ENCODE measurements at regions of chr2 and their contacts with region 1.

Region 1: GRCh38 chr2:181354626-181355025 is 102.6 kb upstream of the ITGA4 start:
- DNase-seq: no peak
- ATAC-seq: no peak
- H3K4me3 ChIP-seq: no peak overlapping the region
- H3K4me3 Mint-ChIP-seq: no peak overlapping the region
- H3K27ac ChIP-seq: no peak overlapping the region
- H3K27ac Mint-ChIP-seq: no peak overlapping the region
- H3K4me1 ChIP-seq: no peaks in the 10 kb centered on the region
- H3K4me1 Mint-ChIP-seq: peaks cover 8% of the 10 kb centered on the region
- H3K27me3 ChIP-seq: no peaks in the 10 kb centered on the region
- H3K27me3 Mint-ChIP-seq: no peaks in the 10 kb centered on the region
- CTCF ChIP-seq: no peak

Region 2: DNA sequence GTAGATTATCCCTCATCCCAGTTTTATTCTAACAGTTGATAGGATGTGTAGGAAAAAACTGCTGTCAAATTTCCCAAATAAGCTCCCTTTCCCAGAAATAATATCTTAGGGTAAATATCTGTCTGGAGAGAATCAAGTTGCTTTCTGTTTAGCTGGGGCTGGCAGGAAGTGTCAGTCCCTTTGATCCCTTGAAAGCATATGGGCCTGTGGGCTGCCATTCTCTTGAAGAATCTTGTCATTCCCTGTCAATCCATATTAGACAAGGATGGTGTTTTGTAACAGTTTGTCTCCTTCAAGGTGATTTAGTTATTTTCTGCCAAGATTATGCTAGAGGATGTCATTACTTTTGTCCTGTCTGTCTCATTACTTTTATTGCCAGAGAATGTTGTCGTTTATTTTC is 411.4 kb before region 1 on chr2:
- CTCF ChIA-PET with region 1: no interaction called
- POLR2A ChIA-PET with region 1: no interaction called
- intact Hi-C with region 1: no loop called
- DNase-seq: no peak
- ATAC-seq: no peak
- H3K4me3 ChIP-seq: no peak overlapping the region
- H3K4me3 Mint-ChIP-seq: no peak overlapping the region
- H3K27ac ChIP-seq: no peak overlapping the region
- H3K27ac Mint-ChIP-seq: no peak overlapping the region
- H3K4me1 ChIP-seq: no peaks in the 10 kb centered on the region
- H3K4me1 Mint-ChIP-seq: peaks cover 6% of the 10 kb centered on the region
- H3K27me3 ChIP-seq: no peaks in the 10 kb centered on the region
- H3K27me3 Mint-ChIP-seq: peaks cover 11% of the 10 kb centered on the region
- CTCF ChIP-seq: no peak

Region 3: GRCh38 chr2:181393472-181393871 is 38.8 kb after region 1 on chr2:
- CTCF ChIA-PET with region 1: no interaction called
- POLR2A ChIA-PET with region 1: no interaction called
- intact Hi-C with region 1: loop called in 1 of 2 experiments (anchors 5 kb)
- DNase-seq: peak in 2 of 9 experiments; percentile 62 to 80
- ATAC-seq: peak; percentile 58
- H3K4me3 ChIP-seq: peak overlapping the region; percentile 13 to 55
- H3K4me3 Mint-ChIP-seq: peak overlapping the region; percentile 76
- H3K27ac ChIP-seq: peak overlapping the region; percentile 38 to 97
- H3K27ac Mint-ChIP-seq: peak overlapping the region; percentile 87
- H3K4me1 ChIP-seq: peaks cover 17% of the 10 kb centered on the region
- H3K4me1 Mint-ChIP-seq: peaks cover 30% of the 10 kb centered on the region
- H3K27me3 ChIP-seq: no peaks in the 10 kb centered on the region
- H3K27me3 Mint-ChIP-seq: no peaks in the 10 kb centered on the region
- CTCF ChIP-seq: no peak

Region 4: DNA sequence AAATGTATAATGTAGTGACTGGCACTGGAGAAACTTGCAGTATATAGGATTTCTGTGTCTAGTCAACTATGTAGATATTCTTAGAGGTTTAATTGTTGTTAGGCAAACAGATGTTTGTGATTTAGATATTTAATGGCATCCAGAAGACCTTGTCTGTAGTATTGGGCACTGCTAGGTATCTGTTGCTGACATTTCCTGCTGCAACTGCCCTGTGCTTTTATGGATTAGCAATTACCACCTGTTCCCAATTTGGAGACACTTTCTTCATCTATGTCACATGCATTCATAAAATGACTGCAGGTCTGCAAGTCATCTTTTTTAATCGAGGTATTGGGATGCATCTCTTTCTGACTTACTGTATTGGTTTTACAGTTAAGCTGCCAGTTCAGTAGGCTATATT is 173.8 kb after region 1 on chr2:
- CTCF ChIA-PET with region 1: no interaction called
- POLR2A ChIA-PET with region 1: no interaction called
- intact Hi-C with region 1: no loop called
- DNase-seq: no peak
- ATAC-seq: no peak
- H3K4me3 ChIP-seq: no peak overlapping the region
- H3K4me3 Mint-ChIP-seq: no peak overlapping the region
- H3K27ac ChIP-seq: no peak overlapping the region
- H3K27ac Mint-ChIP-seq: peak overlapping the region; percentile 14
- H3K4me1 ChIP-seq: no peaks in the 10 kb centered on the region
- H3K4me1 Mint-ChIP-seq: peaks cover 3% of the 10 kb centered on the region
- H3K27me3 ChIP-seq: no peaks in the 10 kb centered on the region
- H3K27me3 Mint-ChIP-seq: no peaks in the 10 kb centered on the region
- CTCF ChIP-seq: no peak